ENCODE measurements at regions of chr2 and their contacts with region 1.

Region 1: DNA sequence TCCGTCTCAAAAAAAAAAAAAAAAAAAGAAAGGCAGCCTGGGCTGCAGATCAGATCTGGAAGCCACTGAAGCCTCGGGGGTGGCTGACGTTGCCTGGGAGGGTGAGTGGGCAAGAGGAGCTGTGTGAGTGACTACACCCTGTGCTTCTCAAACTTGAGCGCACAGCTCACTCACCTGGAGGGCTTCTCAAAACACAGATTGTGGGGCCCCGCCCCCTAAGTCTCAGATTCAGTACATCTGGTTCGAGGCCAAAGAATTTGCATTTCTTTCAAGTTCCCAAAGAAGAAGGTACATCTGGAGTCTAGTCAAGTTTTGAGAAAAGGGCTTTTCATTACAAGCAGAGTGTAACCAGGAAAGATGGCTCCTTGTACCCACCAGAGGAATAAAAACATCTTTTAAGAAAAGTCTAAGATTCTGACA is 97.7 kb upstream of the CAB39 start:
- DNase-seq: peak; percentile 46
- ATAC-seq: peak; percentile 80
- H3K4me3 Mint-ChIP-seq: peak overlapping the region; percentile 64
- H3K27ac Mint-ChIP-seq: peak overlapping the region; percentile 71
- H3K4me1 Mint-ChIP-seq: peaks cover 51% of the 10 kb centered on the region
- H3K27me3 Mint-ChIP-seq: no peaks in the 10 kb centered on the region
- CTCF ChIP-seq: no peak

Region 2: GRCh38 chr2:229196448-229196847 is 1418.5 kb before region 1 on chr2:
- CTCF ChIA-PET with region 1: no interaction called
- POLR2A ChIA-PET with region 1: no interaction called
- intact Hi-C with region 1: no loop called
- DNase-seq: no peak
- ATAC-seq: no peak
- H3K4me3 Mint-ChIP-seq: no peak overlapping the region
- H3K27ac Mint-ChIP-seq: no peak overlapping the region
- H3K4me1 Mint-ChIP-seq: no peaks in the 10 kb centered on the region
- H3K27me3 Mint-ChIP-seq: no peaks in the 10 kb centered on the region
- CTCF ChIP-seq: no peak

Region 3: GRCh38 chr2:230068016-230068650 is 546.8 kb before region 1 on chr2:
- CTCF ChIA-PET with region 1: interaction called, 3 read pairs
- POLR2A ChIA-PET with region 1: interaction called, 3 read pairs
- intact Hi-C with region 1: loop called (anchors 2 kb)
- DNase-seq: peak; percentile 58
- ATAC-seq: peak; percentile 32
- H3K4me3 Mint-ChIP-seq: peak overlapping the region; percentile 90
- H3K27ac Mint-ChIP-seq: peak overlapping the region; percentile 70
- H3K4me1 Mint-ChIP-seq: peaks cover 18% of the 10 kb centered on the region
- H3K27me3 Mint-ChIP-seq: peaks cover 5% of the 10 kb centered on the region
- CTCF ChIP-seq: no peak

Region 4: GRCh38 chr2:230319211-230319862 is 295.6 kb before region 1 on chr2:
- CTCF ChIA-PET with region 1: no interaction called
- POLR2A ChIA-PET with region 1: no interaction called
- intact Hi-C with region 1: loop called (anchors 5 kb)
- DNase-seq: no peak
- ATAC-seq: peak; percentile 86
- H3K4me3 Mint-ChIP-seq: peak overlapping the region; percentile 56
- H3K27ac Mint-ChIP-seq: peak overlapping the region; percentile 90
- H3K4me1 Mint-ChIP-seq: peaks cover 78% of the 10 kb centered on the region
- H3K27me3 Mint-ChIP-seq: no peaks in the 10 kb centered on the region
- CTCF ChIP-seq: no peak

Region 5: GRCh38 chr2:230496891-230497290 is 118.0 kb before region 1 on chr2:
- CTCF ChIA-PET with region 1: interaction called, 4 read pairs
- POLR2A ChIA-PET with region 1: interaction called, 3 read pairs
- intact Hi-C with region 1: loop called (anchors 2 kb)
- DNase-seq: no peak
- ATAC-seq: peak; percentile 78
- H3K4me3 Mint-ChIP-seq: peak overlapping the region; percentile 51
- H3K27ac Mint-ChIP-seq: peak overlapping the region; percentile 88
- H3K4me1 Mint-ChIP-seq: peaks cover 49% of the 10 kb centered on the region
- H3K27me3 Mint-ChIP-seq: no peaks in the 10 kb centered on the region
- CTCF ChIP-seq: no peak

Region 6: GRCh38 chr2:230557065-230557464 is 57.9 kb before region 1 on chr2:
- CTCF ChIA-PET with region 1: no interaction called
- POLR2A ChIA-PET with region 1: no interaction called
- intact Hi-C with region 1: no loop called
- DNase-seq: no peak
- ATAC-seq: no peak
- H3K4me3 Mint-ChIP-seq: no peak overlapping the region
- H3K27ac Mint-ChIP-seq: no peak overlapping the region
- H3K4me1 Mint-ChIP-seq: peaks cover 26% of the 10 kb centered on the region
- H3K27me3 Mint-ChIP-seq: no peaks in the 10 kb centered on the region
- CTCF ChIP-seq: no peak

Region 7: GRCh38 chr2:230602562-230603230 is 12.2 kb before region 1 on chr2:
- CTCF ChIA-PET with region 1: interaction called, 11 read pairs
- POLR2A ChIA-PET with region 1: interaction called, 20 read pairs
- intact Hi-C with region 1: no loop called
- DNase-seq: peak; percentile 41
- ATAC-seq: peak; percentile 80
- H3K4me3 Mint-ChIP-seq: peak overlapping the region; percentile 66
- H3K27ac Mint-ChIP-seq: peak overlapping the region; percentile 96
- H3K4me1 Mint-ChIP-seq: peaks cover 94% of the 10 kb centered on the region
- H3K27me3 Mint-ChIP-seq: no peaks in the 10 kb centered on the region
- CTCF ChIP-seq: no peak

Region 8: GRCh38 chr2:230712443-230713330 is 97.8 kb after region 1 on chr2 and contains the start of gene CAB39:
- CTCF ChIA-PET with region 1: interaction called, 3 read pairs
- POLR2A ChIA-PET with region 1: interaction called, 6 read pairs
- intact Hi-C with region 1: loop called (anchors 1 kb)
- DNase-seq: peak; percentile 95
- ATAC-seq: peak; percentile 91
- H3K4me3 Mint-ChIP-seq: peak within 1 kb of the TSS; percentile 94
- H3K27ac Mint-ChIP-seq: peak within 1 kb of the TSS; percentile 93
- H3K4me1 Mint-ChIP-seq: peaks cover 48% of the 10 kb centered on the region
- H3K27me3 Mint-ChIP-seq: no peaks in the 10 kb centered on the region
- CTCF ChIP-seq: no peak
- total RNA-seq, gene CAB39: 60.1 and 68.6 TPM in 2 replicates

Measured in activated B cell treated with CpG ODN at 0.5 μM for 24 hours (primary cell).